ENCODE measurements at regions of chr21 and their contacts with region 1.

Region 1: DNA sequence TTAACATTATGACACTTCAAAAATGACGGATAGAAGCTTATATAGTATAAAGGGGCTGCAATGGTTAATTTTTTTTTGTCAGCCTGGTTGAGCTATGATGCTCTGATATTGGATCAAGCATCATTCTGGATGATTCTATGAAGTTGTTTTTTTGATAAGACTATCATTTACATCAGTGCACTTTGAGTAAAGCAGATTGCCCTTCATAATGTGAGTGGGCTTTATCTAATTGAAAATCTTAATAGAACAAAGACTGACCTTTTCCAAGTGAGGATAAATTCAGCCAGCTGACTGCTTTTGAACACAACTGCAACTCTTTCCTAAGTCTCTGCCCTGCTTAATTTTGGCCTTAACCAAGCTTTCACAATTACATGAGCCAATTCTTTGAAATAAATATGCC is 1476.2 kb downstream of the NCAM2 start:
- DNase-seq: no peak
- H3K4me3 ChIP-seq: no peak overlapping the region
- H3K27ac ChIP-seq: no peak overlapping the region
- H3K4me1 ChIP-seq: no peaks in the 10 kb centered on the region
- H3K27me3 ChIP-seq: no peaks in the 10 kb centered on the region
- CTCF ChIP-seq: no peak

Region 2: GRCh38 chr21:24316277-24316922 is 1842.0 kb after region 1 on chr21:
- intact Hi-C with region 1: loop called (anchors 5 kb)
- DNase-seq: no peak
- H3K4me3 ChIP-seq: no peak overlapping the region
- H3K27ac ChIP-seq: no peak overlapping the region
- H3K4me1 ChIP-seq: no peaks in the 10 kb centered on the region
- H3K27me3 ChIP-seq: no peaks in the 10 kb centered on the region
- CTCF ChIP-seq: no peak

Measured in tibial artery (tissue), 4 donors.